Transverse colon (tissue), 4 donors: ENCODE measurements at regions of chr19 and their contacts with region 1.

Region 1: GRCh38 chr19:19053508-19054314 is 10.1 kb upstream of the SLC25A42 start:
- DNase-seq: peak; percentile 77
- H3K4me3 ChIP-seq: no peak overlapping the region
- H3K27ac ChIP-seq: no peak overlapping the region
- H3K4me1 ChIP-seq: no peaks in the 10 kb centered on the region
- H3K27me3 ChIP-seq: no peaks in the 10 kb centered on the region
- CTCF ChIP-seq: peak; percentile 68 to 82 (median 78)
- EP300 ChIP-seq: no peak
- POLR2A ChIP-seq: no peak

Region 2: GRCh38 chr19:18967358-18968146 is 86.2 kb before region 1 on chr19:
- in situ Hi-C with region 1: no loop called
- intact Hi-C with region 1: no loop called
- DNase-seq: peak; percentile 32
- H3K4me3 ChIP-seq: no peak overlapping the region
- H3K27ac ChIP-seq: peak overlapping the region; percentile 38 to 62 (median 60)
- H3K4me1 ChIP-seq: peaks cover 0 to 19% (median 12%) of the 10 kb centered on the region in 4 donors
- H3K27me3 ChIP-seq: no peaks in the 10 kb centered on the region
- CTCF ChIP-seq: no peak
- EP300 ChIP-seq: no peak
- POLR2A ChIP-seq: no peak

Region 3: DNA sequence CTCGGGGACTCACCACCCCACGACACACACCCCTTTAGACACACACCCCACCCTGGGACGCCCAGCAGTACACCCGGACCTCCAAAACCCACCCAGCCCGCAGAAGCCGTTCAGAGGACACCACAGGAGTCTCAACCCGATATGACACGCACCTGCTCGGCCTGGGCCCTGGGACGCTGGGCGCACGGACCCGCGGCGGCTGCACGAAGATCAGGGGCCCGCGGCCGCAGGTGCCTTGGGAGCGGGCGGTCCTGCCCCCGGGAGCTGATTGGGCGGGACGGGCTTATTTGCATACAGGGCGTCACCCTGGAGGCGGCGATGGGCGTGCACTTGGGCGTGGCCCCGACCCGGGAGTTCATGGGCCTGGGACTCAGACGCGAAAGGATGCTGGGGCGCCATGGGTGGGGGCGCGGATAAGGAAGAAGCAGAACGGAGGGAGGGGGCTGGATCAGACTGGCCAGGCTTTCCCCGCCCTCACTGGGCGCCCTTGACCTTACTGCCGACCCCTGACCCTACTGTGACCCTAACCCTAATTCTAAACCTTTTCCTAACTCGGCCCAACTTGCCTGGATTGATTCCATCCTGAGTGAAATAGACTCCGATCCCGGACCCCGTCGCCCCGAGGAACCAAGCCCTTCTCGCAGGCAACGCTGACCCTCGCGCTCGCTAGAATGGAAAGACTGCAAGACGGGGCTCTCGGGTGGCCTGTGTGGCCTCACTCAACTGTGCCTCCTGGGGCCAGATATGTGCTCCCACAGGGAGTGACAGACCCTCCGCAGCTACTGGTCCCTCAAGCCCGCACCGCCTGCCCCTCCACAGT is 116.6 kb after region 1 on chr19 and contains the start of gene MEF2B:
- in situ Hi-C with region 1: no loop called
- intact Hi-C with region 1: loop called (anchors 10 kb)
- DNase-seq: peak; percentile 87
- H3K4me3 ChIP-seq: peak within 1 kb of the TSS in 2 of 4 donors; percentile 20 to 35
- H3K27ac ChIP-seq: no peak within 1 kb of the TSS
- H3K4me1 ChIP-seq: peaks cover 0 to 8% (median 8%) of the 10 kb centered on the region in 4 donors
- H3K27me3 ChIP-seq: no peaks in the 10 kb centered on the region
- CTCF ChIP-seq: no peak
- EP300 ChIP-seq: no peak
- POLR2A ChIP-seq: no peak
- total RNA-seq, gene MEF2B: 0.95 TPM in 1 of 4 donors, not detected in the others